MCF 10A (cell line): ENCODE measurements at regions of chr3 and their contacts with region 1.

Region 1: DNA sequence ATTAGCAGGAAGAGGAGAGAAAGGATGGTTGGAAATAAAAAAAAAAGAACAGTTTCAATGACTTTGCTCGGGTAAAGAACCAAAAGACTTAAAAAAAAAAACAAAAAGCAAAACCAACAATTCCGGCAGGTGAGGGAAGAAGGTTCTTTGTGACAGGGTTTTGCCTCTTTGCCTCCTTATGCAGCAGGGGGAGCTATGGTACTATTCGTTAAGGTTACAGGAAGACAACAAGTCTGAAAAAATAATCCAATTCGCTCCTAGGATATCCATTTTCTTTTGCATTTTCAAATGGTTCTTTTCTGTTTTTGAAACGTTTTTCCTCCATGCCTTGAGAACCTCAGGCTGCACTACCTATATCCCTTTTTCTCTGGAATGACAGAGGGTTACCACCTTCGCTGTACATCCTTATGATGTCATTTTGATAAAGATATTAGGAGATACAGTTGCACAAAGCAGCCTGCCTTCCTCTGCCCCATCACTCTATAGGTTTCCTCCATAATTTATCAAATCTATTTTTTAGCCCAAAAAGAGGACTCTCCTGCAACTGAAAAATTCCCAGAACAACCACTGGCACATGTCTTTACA is 55.0 kb downstream of the CFAP20DC start:
- DNase-seq: peak; percentile 83
- H3K4me3 Mint-ChIP-seq: no peak overlapping the region
- H3K27ac Mint-ChIP-seq: no peak overlapping the region
- H3K4me1 Mint-ChIP-seq: peaks cover 21% of the 10 kb centered on the region
- H3K27me3 Mint-ChIP-seq: no peaks in the 10 kb centered on the region
- CTCF ChIP-seq: peak; percentile 67

Region 2: GRCh38 chr3:58383904-58384303 is 610.9 kb before region 1 on chr3:
- CTCF ChIA-PET with region 1: no interaction called
- POLR2A ChIA-PET with region 1: no interaction called
- intact Hi-C with region 1: no loop called
- DNase-seq: peak; percentile 97
- H3K4me3 Mint-ChIP-seq: peak overlapping the region; percentile 24
- H3K27ac Mint-ChIP-seq: peak overlapping the region; percentile 77
- H3K4me1 Mint-ChIP-seq: peaks cover 25% of the 10 kb centered on the region
- H3K27me3 Mint-ChIP-seq: no peaks in the 10 kb centered on the region
- CTCF ChIP-seq: no peak

Region 3: GRCh38 chr3:58640700-58641372 is 354.0 kb before region 1 on chr3:
- CTCF ChIA-PET with region 1: interaction called, 9 read pairs
- POLR2A ChIA-PET with region 1: no interaction called
- intact Hi-C with region 1: loop called (anchors 10 kb)
- DNase-seq: peak; percentile 83
- H3K4me3 Mint-ChIP-seq: no peak overlapping the region
- H3K27ac Mint-ChIP-seq: no peak overlapping the region
- H3K4me1 Mint-ChIP-seq: peaks cover under 1% of the 10 kb centered on the region
- H3K27me3 Mint-ChIP-seq: no peaks in the 10 kb centered on the region
- CTCF ChIP-seq: peak; percentile 93

Region 4: DNA sequence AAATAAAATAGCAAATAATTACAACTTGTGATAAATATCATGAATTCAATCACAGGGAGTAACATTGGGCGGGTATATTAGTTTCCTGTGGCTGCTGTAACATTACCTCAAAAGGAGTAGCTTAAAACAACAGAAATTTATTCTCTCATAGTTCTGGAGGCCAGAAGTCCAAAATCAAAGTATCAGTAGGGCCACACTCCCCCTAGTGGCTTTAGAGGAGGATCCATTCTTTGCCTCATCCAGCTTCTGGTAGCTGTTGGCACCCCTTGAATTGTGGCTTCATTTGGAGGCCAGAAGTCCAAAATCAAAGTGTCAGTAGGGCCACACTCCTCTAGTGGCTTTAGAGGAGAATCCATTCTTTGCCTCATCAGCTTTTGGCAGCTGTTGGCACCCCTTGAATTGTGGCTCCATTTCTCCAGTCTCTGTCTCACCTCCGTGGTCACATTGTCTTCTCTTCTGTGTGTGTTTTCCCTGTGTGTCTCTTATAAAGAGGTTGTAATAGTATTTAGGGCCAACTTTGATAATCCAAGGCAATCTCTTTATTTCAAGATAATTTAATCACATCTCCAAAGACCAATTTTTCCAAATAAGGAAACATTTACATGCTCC is 58.1 kb after region 1 on chr3:
- CTCF ChIA-PET with region 1: interaction called, 99 read pairs
- POLR2A ChIA-PET with region 1: interaction called, 3 read pairs
- intact Hi-C with region 1: loop called (anchors 1 kb)
- DNase-seq: peak; percentile 70
- H3K4me3 Mint-ChIP-seq: no peak overlapping the region
- H3K27ac Mint-ChIP-seq: no peak overlapping the region
- H3K4me1 Mint-ChIP-seq: no peaks in the 10 kb centered on the region
- H3K27me3 Mint-ChIP-seq: no peaks in the 10 kb centered on the region
- CTCF ChIP-seq: peak; percentile 60

Region 5: DNA sequence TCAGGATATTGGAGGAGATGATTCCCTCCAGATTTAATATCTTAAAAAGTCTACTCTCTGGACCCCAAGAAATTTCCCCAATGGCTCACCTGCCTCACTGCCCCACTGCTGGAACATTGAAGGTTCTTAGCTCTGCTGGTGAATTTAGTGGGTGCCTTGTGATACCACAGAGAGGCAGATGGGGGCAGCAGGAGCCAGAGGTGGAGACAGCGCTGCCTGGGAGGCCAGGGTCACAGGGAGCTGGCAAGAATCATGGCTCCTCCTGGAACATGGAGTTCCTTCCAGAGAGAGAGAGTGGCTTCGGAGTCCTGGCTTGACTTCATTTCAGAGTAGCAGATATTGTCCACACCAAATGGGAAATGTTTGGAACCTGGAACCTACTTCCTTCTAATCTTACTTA is 318.5 kb after region 1 on chr3:
- CTCF ChIA-PET with region 1: interaction called, 5 read pairs
- POLR2A ChIA-PET with region 1: no interaction called
- intact Hi-C with region 1: loop called (anchors 10 kb)
- DNase-seq: peak; percentile 70
- H3K4me3 Mint-ChIP-seq: no peak overlapping the region
- H3K27ac Mint-ChIP-seq: peak overlapping the region; percentile 29
- H3K4me1 Mint-ChIP-seq: peaks cover 5% of the 10 kb centered on the region
- H3K27me3 Mint-ChIP-seq: no peaks in the 10 kb centered on the region
- CTCF ChIP-seq: peak; percentile 86

Region 6: GRCh38 chr3:59559721-59560435 is 565.0 kb after region 1 on chr3:
- CTCF ChIA-PET with region 1: interaction called, 4 read pairs
- POLR2A ChIA-PET with region 1: no interaction called
- intact Hi-C with region 1: loop called (anchors 5 kb)
- DNase-seq: peak; percentile 98
- H3K4me3 Mint-ChIP-seq: no peak overlapping the region
- H3K27ac Mint-ChIP-seq: peak overlapping the region; percentile 65
- H3K4me1 Mint-ChIP-seq: peaks cover 45% of the 10 kb centered on the region
- H3K27me3 Mint-ChIP-seq: no peaks in the 10 kb centered on the region
- CTCF ChIP-seq: no peak

Region 7: GRCh38 chr3:59857589-59858346 is 862.9 kb after region 1 on chr3:
- CTCF ChIA-PET with region 1: interaction called, 7 read pairs
- POLR2A ChIA-PET with region 1: no interaction called
- intact Hi-C with region 1: loop called (anchors 1 kb)
- DNase-seq: peak; percentile 86
- H3K4me3 Mint-ChIP-seq: no peak overlapping the region
- H3K27ac Mint-ChIP-seq: no peak overlapping the region
- H3K4me1 Mint-ChIP-seq: peaks cover 10% of the 10 kb centered on the region
- H3K27me3 Mint-ChIP-seq: no peaks in the 10 kb centered on the region
- CTCF ChIP-seq: peak; percentile 75